CD8-positive, alpha-beta T cell (primary cell): ENCODE measurements at regions of chr1 and their contacts with region 1.

Region 1: DNA sequence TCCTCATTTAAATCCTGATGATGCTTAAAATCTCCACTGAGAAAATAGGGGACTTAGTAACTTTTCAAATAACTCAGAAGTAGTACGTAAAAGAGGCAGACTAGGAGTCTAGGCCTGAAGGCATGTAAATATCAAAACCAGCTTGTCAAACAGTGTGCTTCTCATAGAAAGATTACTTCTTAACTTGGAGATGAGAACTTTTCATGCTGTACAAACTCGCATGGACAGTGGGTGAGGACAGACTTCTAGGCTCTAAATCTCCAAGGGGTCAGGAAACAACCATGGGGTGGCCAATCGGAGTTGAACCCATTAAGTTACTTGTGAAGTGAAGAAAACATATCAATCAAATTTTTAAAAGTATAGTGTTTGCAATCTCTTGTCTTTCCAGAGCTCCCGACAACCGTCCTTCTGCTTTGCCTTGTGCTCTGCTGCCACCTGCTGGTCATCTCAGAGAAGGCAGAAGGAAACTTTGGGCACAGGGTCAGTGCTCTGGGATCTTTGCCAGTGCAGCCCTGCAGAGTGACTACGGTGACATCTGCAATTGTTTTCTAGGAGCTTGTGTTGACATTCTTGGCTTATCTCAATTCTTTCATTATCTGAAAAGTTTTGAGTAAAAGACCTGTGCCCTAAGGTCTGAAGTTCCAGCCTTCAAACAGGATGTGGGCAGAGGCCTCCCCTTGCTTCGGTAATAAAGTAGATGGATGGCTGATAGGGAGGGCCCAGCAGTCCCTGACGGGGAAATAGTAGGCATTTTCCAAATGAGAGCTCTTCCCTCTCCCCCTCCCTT is 105.1 kb upstream of the PDE4B start:
- DNase-seq: peak; percentile 51 to 87 (median 75)
- ATAC-seq: peak; percentile 74
- H3K4me3 ChIP-seq: no peak overlapping the region
- H3K4me3 Mint-ChIP-seq: no peak overlapping the region
- H3K27ac ChIP-seq: no peak overlapping the region
- H3K27ac Mint-ChIP-seq: no peak overlapping the region
- H3K4me1 ChIP-seq: peaks cover 8% of the 10 kb centered on the region
- H3K4me1 Mint-ChIP-seq: peaks cover 4% of the 10 kb centered on the region
- H3K27me3 ChIP-seq: no peaks in the 10 kb centered on the region
- H3K27me3 Mint-ChIP-seq: peaks cover 19% of the 10 kb centered on the region
- CTCF ChIP-seq: peak; percentile 99

Region 2: DNA sequence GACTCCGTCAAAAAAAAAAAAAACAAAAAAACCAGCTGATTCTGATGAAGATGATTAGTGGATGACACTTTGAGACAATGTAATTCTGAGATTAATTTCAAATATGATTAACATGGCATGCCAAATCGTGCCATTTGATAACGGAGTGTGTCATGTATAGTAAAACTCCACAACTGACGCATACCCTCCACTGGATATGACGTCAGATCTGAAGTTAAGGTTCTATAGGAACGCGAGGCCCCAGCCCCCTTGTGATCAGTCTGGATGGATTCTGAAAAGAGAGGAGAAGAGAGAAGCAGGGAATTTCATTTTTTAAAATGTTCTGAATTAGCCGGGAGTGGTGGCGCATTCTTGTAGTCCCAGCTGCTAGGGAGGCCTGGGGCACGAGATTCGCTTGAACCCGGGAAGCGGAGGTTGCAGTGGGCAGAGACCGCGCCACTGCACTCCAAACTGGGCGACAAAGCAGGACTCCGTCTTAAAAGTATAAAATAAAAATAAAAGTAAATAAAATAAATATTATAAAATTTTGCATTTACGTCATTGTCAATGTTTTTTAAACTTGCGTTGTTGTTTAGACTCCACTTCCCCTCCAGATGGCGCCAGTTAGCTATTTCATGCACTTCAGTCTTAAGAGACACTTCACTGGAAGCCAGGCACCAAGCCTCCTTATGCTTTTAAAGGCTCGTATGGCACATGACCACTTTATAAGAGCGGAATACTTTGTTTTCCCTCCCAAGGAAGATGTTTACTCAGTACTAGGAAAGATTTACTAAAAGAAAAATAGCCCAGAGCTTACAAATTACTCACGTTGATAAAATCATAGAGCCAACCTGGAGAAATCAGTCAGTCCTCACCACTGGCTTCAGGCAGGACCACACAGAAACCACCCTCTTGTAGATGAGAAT is 1418.7 kb before region 1 on chr1:
- CTCF ChIA-PET with region 1: no interaction called
- POLR2A ChIA-PET with region 1: no interaction called
- intact Hi-C with region 1: loop called in 1 of 2 experiments (anchors 2 kb)
- DNase-seq: peak; percentile 5 to 77 (median 60)
- ATAC-seq: peak; percentile 52
- H3K4me3 ChIP-seq: no peak overlapping the region
- H3K4me3 Mint-ChIP-seq: no peak overlapping the region
- H3K27ac ChIP-seq: no peak overlapping the region
- H3K27ac Mint-ChIP-seq: no peak overlapping the region
- H3K4me1 ChIP-seq: no peaks in the 10 kb centered on the region
- H3K4me1 Mint-ChIP-seq: no peaks in the 10 kb centered on the region
- H3K27me3 ChIP-seq: peaks cover 0 to 4% of the 10 kb centered on the region in 2 experiments
- H3K27me3 Mint-ChIP-seq: peaks cover 13% of the 10 kb centered on the region
- CTCF ChIP-seq: peak; percentile 68

Region 3: DNA sequence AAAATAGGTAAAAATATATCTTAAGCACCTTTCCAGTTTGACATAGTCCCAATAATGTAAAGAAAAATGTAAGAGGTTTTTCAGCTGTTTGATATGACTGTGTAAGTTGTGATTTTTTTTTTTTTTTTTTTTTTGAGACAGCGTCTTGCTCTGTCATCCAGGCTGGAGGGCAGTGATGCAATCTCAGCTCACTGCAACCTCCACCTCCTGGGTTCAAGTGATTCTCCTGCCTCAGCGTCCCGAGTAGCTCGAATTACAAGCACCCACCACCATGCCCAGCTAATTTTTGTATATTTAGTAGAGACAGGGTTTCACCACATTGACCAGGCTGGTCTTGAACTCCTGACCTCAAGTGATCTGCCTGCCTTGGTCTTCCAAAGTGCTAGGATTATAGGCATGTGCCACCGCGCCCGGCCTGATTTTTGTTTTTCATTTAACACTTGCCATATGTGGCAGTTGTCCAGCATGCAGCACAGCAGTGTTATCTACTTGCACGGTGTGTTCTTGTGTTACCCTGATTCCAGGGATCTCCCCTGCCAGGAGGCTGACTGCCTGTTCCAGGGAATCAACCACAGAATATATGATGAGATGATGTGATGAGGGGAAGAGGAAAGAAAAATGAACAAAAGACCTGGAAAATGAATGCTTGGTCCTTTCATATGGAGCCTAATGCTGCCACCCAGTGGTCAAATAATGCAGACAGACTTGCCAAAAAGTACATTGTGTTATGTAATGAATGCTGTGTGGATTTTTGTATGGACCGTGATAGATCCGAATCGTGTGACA is 863.7 kb before region 1 on chr1:
- CTCF ChIA-PET with region 1: no interaction called
- POLR2A ChIA-PET with region 1: no interaction called
- intact Hi-C with region 1: loop called in 1 of 2 experiments (anchors 10 kb)
- DNase-seq: peak; percentile 15 to 82 (median 65)
- ATAC-seq: peak; percentile 56
- H3K4me3 ChIP-seq: no peak overlapping the region
- H3K4me3 Mint-ChIP-seq: peak overlapping the region; percentile 38
- H3K27ac ChIP-seq: no peak overlapping the region
- H3K27ac Mint-ChIP-seq: no peak overlapping the region
- H3K4me1 ChIP-seq: peaks cover 7% of the 10 kb centered on the region
- H3K4me1 Mint-ChIP-seq: peaks cover 27% of the 10 kb centered on the region
- H3K27me3 ChIP-seq: no peaks in the 10 kb centered on the region
- H3K27me3 Mint-ChIP-seq: no peaks in the 10 kb centered on the region
- CTCF ChIP-seq: peak; percentile 88

Region 4: DNA sequence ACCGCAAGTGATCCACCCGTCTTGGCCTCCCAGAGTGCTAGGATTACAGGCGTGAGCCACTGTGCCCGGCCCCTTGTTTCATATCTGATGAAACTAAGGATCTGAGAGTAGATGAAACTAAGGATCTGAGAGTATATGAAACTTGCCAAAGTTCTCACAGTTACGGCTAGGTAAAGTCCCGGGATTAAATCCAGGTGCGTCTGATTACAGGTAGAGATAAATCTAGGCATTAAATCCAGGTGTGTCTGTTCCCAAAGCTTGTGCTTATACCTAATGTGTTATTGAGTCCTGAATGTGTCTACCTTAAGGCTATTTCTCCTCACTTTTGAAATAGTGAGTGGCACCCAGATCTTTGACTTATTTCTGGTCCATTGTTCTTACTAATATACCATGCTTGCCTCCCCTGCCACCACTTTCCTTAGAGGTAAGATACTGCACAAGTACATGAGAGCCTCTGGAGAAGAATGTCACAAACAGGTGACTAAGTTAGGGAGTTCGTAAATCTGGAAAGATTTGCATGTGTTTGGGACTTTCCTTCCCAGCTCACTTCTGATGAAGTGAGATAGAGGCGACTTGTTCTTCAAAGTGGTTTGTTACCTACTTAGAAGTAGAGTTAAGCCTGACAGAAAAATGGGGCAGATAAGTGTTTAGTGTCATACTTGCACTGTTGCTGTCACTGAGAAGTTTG is 473.1 kb before region 1 on chr1:
- CTCF ChIA-PET with region 1: interaction called, 10 read pairs
- POLR2A ChIA-PET with region 1: no interaction called
- intact Hi-C with region 1: loop called (anchors 1 to 2 kb)
- DNase-seq: no peak
- ATAC-seq: no peak
- H3K4me3 ChIP-seq: no peak overlapping the region
- H3K4me3 Mint-ChIP-seq: no peak overlapping the region
- H3K27ac ChIP-seq: no peak overlapping the region
- H3K27ac Mint-ChIP-seq: no peak overlapping the region
- H3K4me1 ChIP-seq: peaks cover 4% of the 10 kb centered on the region
- H3K4me1 Mint-ChIP-seq: peaks cover 9% of the 10 kb centered on the region
- H3K27me3 ChIP-seq: no peaks in the 10 kb centered on the region
- H3K27me3 Mint-ChIP-seq: no peaks in the 10 kb centered on the region
- CTCF ChIP-seq: no peak

Region 5: GRCh38 chr1:65431111-65431705 is 256.4 kb before region 1 on chr1:
- CTCF ChIA-PET with region 1: interaction called, 31 read pairs
- POLR2A ChIA-PET with region 1: no interaction called
- intact Hi-C with region 1: loop called (anchors 1 to 2 kb)
- DNase-seq: peak in 2 of 9 experiments; percentile 38 to 45
- ATAC-seq: peak; percentile 55
- H3K4me3 ChIP-seq: no peak overlapping the region
- H3K4me3 Mint-ChIP-seq: no peak overlapping the region
- H3K27ac ChIP-seq: no peak overlapping the region
- H3K27ac Mint-ChIP-seq: no peak overlapping the region
- H3K4me1 ChIP-seq: no peaks in the 10 kb centered on the region
- H3K4me1 Mint-ChIP-seq: no peaks in the 10 kb centered on the region
- H3K27me3 ChIP-seq: no peaks in the 10 kb centered on the region
- H3K27me3 Mint-ChIP-seq: no peaks in the 10 kb centered on the region
- CTCF ChIP-seq: peak; percentile 70

Region 6: GRCh38 chr1:65773391-65773790 is 85.8 kb after region 1 on chr1:
- CTCF ChIA-PET with region 1: no interaction called
- POLR2A ChIA-PET with region 1: no interaction called
- intact Hi-C with region 1: no loop called
- DNase-seq: no peak
- ATAC-seq: no peak
- H3K4me3 ChIP-seq: no peak overlapping the region
- H3K4me3 Mint-ChIP-seq: no peak overlapping the region
- H3K27ac ChIP-seq: no peak overlapping the region
- H3K27ac Mint-ChIP-seq: no peak overlapping the region
- H3K4me1 ChIP-seq: no peaks in the 10 kb centered on the region
- H3K4me1 Mint-ChIP-seq: no peaks in the 10 kb centered on the region
- H3K27me3 ChIP-seq: peaks cover 0 to 3% of the 10 kb centered on the region in 2 experiments
- H3K27me3 Mint-ChIP-seq: peaks cover 9% of the 10 kb centered on the region
- CTCF ChIP-seq: no peak

Region 7: DNA sequence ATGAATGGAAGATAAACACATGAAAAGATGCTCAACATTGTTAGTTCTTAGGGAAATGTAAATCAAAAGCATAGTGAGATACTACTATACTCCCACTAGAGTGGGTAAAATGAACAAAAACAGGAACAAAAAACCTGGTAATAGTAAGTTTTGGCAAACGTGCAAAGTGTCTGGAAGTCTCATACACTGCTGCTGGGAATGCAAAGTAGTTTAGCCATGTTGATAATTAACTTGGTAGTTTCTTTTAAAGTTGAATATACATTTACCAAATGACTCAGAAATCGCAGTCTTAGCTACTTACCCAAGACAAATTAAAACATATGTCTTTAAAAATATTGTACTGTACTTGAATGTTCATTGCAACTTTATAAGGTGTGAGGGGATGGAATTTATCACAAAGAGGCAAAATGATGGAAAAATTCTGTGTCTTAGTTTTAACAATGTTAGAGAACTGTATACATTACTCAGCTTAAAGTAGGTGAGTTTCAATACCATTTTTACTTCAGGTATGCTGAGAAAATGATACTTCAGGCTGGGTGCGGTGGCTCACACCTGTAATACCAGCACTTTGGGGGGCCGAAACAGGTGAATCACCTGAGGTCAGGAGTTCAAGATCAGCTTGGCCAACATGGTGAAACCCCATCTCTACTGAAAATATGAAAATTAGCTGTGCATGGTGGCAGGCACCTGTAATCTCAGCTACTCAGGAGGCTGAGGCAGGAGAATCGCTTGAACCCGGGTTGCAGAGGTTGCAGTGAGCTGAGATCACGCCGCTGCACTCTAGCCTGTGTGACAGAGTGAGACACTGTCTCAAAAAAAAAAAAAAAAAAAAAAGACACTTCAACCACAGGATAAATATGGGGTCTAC is 207.4 kb after region 1 on chr1:
- CTCF ChIA-PET with region 1: no interaction called
- POLR2A ChIA-PET with region 1: no interaction called
- intact Hi-C with region 1: no loop called
- DNase-seq: no peak
- ATAC-seq: no peak
- H3K4me3 ChIP-seq: no peak overlapping the region
- H3K4me3 Mint-ChIP-seq: no peak overlapping the region
- H3K27ac ChIP-seq: no peak overlapping the region
- H3K27ac Mint-ChIP-seq: no peak overlapping the region
- H3K4me1 ChIP-seq: no peaks in the 10 kb centered on the region
- H3K4me1 Mint-ChIP-seq: no peaks in the 10 kb centered on the region
- H3K27me3 ChIP-seq: no peaks in the 10 kb centered on the region
- H3K27me3 Mint-ChIP-seq: peaks cover 13% of the 10 kb centered on the region
- CTCF ChIP-seq: no peak